ENCODE measurements at regions of chr13 and their contacts with region 1.

Region 1: GRCh38 chr13:101144808-101145419 is 271.4 kb downstream of the NALCN start:
- DNase-seq: peak; percentile 75
- H3K4me3 ChIP-seq: no peak overlapping the region
- H3K27ac ChIP-seq: no peak overlapping the region
- H3K4me1 ChIP-seq: no peaks in the 10 kb centered on the region
- H3K27me3 ChIP-seq: no peaks in the 10 kb centered on the region
- CTCF ChIP-seq: peak; percentile 71

Region 2: DNA sequence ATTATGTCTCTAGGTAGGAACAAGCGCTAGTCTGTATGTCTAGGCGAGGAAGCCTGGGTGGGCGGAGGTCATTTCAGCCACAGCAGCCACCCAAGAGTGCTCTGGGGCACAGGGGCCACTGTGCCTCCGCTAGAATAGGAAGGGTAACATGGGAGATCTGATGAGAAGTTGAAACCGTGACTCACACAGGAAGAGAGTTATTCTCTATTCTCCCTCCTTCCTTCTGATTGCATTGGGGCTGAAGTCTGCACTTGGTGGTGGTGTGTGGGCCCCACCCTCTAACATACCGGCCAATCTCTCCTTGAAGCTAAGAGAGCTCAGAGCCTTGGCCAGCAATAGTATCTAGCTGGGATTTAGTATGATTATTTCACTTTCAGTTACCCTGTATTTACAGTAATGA is 536.0 kb before region 1 on chr13:
- CTCF ChIA-PET with region 1: no interaction called
- POLR2A ChIA-PET with region 1: no interaction called
- intact Hi-C with region 1: no loop called
- DNase-seq: peak; percentile 22
- H3K4me3 ChIP-seq: no peak overlapping the region
- H3K27ac ChIP-seq: no peak overlapping the region
- H3K4me1 ChIP-seq: no peaks in the 10 kb centered on the region
- H3K27me3 ChIP-seq: no peaks in the 10 kb centered on the region
- CTCF ChIP-seq: no peak

Region 3: GRCh38 chr13:100633461-100633860 is 511.5 kb before region 1 on chr13:
- CTCF ChIA-PET with region 1: no interaction called
- POLR2A ChIA-PET with region 1: no interaction called
- intact Hi-C with region 1: no loop called
- DNase-seq: no peak
- H3K4me3 ChIP-seq: no peak overlapping the region
- H3K27ac ChIP-seq: no peak overlapping the region
- H3K4me1 ChIP-seq: peaks cover 9% of the 10 kb centered on the region
- H3K27me3 ChIP-seq: no peaks in the 10 kb centered on the region
- CTCF ChIP-seq: no peak

Region 4: GRCh38 chr13:101289764-101290163 is 144.8 kb after region 1 on chr13:
- CTCF ChIA-PET with region 1: no interaction called
- POLR2A ChIA-PET with region 1: no interaction called
- intact Hi-C with region 1: loop called (anchors 2 kb)
- DNase-seq: peak; percentile 62
- H3K4me3 ChIP-seq: no peak overlapping the region
- H3K27ac ChIP-seq: no peak overlapping the region
- H3K4me1 ChIP-seq: no peaks in the 10 kb centered on the region
- H3K27me3 ChIP-seq: no peaks in the 10 kb centered on the region
- CTCF ChIP-seq: no peak

Region 5: DNA sequence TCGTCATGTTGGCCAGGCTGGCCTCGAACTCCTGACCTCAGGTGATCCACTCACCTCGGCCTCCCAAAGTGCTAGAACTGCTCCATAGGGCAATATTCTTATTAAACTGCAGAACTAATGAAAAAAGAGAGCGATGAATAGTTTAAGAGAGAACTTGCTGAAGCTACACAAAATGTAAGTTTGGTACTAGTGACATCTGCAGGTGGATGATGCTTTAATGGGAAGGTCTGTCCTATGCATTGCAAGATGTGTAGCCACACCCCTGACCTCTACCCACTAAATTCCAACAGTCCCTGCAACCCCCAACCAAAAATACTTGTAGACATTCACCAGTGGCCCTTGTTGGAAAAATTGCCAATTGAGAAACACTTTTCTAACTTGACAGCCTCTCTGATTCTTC is 153.6 kb after region 1 on chr13:
- CTCF ChIA-PET with region 1: interaction called, 3 read pairs
- POLR2A ChIA-PET with region 1: no interaction called
- intact Hi-C with region 1: loop called (anchors 2 kb)
- DNase-seq: peak; percentile 11
- H3K4me3 ChIP-seq: no peak overlapping the region
- H3K27ac ChIP-seq: no peak overlapping the region
- H3K4me1 ChIP-seq: no peaks in the 10 kb centered on the region
- H3K27me3 ChIP-seq: no peaks in the 10 kb centered on the region
- CTCF ChIP-seq: no peak

Region 6: GRCh38 chr13:101474419-101474957 is 329.6 kb after region 1 on chr13:
- CTCF ChIA-PET with region 1: interaction called, 5 read pairs
- POLR2A ChIA-PET with region 1: no interaction called
- intact Hi-C with region 1: loop called (anchors 2 kb)
- DNase-seq: peak; percentile 60
- H3K4me3 ChIP-seq: no peak overlapping the region
- H3K27ac ChIP-seq: no peak overlapping the region
- H3K4me1 ChIP-seq: no peaks in the 10 kb centered on the region
- H3K27me3 ChIP-seq: no peaks in the 10 kb centered on the region
- CTCF ChIP-seq: peak; percentile 57

Region 7: DNA sequence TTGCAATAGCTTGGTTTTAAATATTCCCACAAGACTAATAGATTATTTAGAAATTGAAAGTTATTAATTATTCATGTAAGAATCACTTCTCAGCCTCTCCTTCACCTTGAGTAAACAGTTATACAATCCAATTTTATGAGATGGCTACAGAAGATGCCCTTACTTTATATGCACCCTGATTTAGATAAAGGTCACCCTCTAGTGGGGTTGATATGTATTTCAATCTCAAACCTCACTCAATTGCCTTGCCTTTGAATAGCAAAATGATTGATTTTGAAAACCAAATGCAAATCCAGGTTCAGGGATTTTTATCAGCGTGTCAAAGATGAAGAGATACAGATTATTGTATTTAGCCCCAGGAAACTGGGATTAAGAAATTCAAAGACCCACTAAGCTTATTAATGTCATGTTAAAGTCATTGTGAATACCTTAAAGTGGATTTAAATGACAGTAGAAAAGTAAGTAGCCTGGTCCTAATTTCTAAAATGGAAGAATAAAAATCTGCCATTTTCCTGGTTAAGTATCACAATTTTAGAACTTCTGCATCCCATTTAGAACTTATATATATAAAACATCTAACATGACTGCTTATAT is 612.6 kb after region 1 on chr13:
- CTCF ChIA-PET with region 1: interaction called, 3 read pairs
- POLR2A ChIA-PET with region 1: no interaction called
- intact Hi-C with region 1: loop called (anchors 2 kb)
- DNase-seq: peak; percentile 69
- H3K4me3 ChIP-seq: no peak overlapping the region
- H3K27ac ChIP-seq: no peak overlapping the region
- H3K4me1 ChIP-seq: no peaks in the 10 kb centered on the region
- H3K27me3 ChIP-seq: no peaks in the 10 kb centered on the region
- CTCF ChIP-seq: peak; percentile 70

Region 8: DNA sequence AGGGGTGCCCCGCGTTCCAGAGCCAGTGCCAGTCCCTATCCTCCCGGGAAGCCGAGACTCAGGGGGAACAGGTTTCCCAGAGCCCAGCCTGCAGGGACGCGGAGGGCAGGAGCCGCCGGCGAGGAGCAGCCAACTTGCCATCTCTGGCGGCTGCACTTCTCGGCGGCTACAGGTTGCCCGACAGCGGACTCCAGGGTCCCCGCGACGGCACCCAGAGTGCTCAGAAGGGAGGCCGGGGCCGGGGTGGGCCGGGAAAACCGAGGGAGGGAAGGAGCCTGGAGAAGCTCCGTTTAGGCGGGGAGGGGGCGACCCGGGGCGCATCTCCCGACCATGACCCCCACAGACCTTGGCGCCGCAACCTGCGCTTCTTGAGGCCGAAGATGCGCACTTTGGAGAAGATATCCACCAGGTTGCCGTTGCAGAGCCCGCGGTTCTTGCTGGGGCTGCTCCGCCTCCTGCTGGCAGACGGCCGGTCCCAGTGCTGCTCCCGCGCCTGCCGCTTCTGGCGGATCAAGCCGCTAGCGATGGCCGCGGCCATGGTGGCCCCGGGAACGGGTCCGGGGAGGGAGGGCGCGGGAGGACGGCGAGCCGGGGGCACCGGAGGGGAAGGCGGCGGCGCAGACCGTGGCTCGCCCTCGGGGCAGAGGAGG is 771.3 kb after region 1 on chr13:
- CTCF ChIA-PET with region 1: interaction called, 5 read pairs
- POLR2A ChIA-PET with region 1: no interaction called
- intact Hi-C with region 1: loop called (anchors 5 kb)
- DNase-seq: peak; percentile 61
- H3K4me3 ChIP-seq: peak overlapping the region; percentile 49
- H3K27ac ChIP-seq: no peak overlapping the region
- H3K4me1 ChIP-seq: peaks cover 13% of the 10 kb centered on the region
- H3K27me3 ChIP-seq: peaks cover 55% of the 10 kb centered on the region
- CTCF ChIP-seq: peak; percentile 60